CD14-positive monocyte (primary cell): ENCODE measurements at regions of chr20 and their contacts with region 1.

Region 1: GRCh38 chr20:40323361-40323794 is 365.7 kb downstream of the MAFB start:
- DNase-seq: peak; percentile 92 to 96 (median 94)
- H3K4me3 ChIP-seq: peak overlapping the region in 1 of 3 experiments; percentile 27
- H3K4me3 Mint-ChIP-seq: peak overlapping the region; percentile 35 to 44
- H3K27ac ChIP-seq: peak overlapping the region; percentile 78 to 89
- H3K27ac Mint-ChIP-seq: peak overlapping the region; percentile 92 to 99 (median 95)
- H3K4me1 ChIP-seq: peaks cover 71 to 78% of the 10 kb centered on the region in 2 donors
- H3K4me1 Mint-ChIP-seq: peaks cover 72% of the 10 kb centered on the region
- H3K27me3 ChIP-seq: no peaks in the 10 kb centered on the region
- H3K27me3 Mint-ChIP-seq: peaks cover 0 to 6% (median 6%) of the 10 kb centered on the region in 3 donors
- CTCF ChIP-seq: no peak

Region 2: DNA sequence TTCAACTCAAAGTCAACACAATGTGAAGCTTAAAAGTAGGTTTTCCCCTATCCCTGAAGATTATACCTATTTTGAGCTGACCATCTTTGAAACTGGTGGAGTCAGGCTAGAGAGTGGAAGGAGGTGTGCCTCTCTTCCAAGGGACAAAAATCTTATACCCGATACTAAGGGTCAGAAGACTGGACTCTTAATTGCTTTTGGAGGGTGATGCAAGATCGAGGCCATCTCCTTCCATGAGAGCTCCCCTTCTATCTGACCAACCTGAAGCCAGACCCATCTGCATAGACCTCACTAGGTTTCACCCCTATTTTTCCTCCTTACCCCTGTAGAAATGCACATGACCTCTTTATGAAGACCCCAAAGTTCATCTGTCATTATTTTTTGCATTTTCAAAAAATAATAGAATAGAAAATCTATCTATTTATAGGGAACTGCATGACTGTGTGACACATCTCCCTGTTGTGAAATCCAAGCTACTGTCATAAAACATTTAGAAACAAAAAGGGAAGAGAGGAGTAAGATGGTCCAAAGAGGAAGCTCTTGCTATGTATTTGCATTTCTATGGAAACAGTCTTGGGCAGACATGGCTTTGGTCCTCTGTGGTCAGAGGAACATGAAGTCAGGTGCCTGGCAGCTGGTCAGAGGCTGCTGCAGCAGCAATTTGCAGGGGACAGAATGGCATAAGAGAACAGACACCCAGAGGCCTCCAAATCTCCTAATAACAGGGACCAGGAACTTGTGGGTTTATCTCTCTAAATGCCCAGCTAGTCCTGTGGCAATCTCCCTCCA is 16.5 kb after region 1 on chr20:
- intact Hi-C with region 1: loop called in 1 of 2 experiments (anchors 1 kb)
- DNase-seq: peak; percentile 97 to 100 (median 99)
- H3K4me3 ChIP-seq: no peak overlapping the region
- H3K4me3 Mint-ChIP-seq: peak overlapping the region in 1 of 2 donors; percentile 50
- H3K27ac ChIP-seq: peak overlapping the region; percentile 93 to 98
- H3K27ac Mint-ChIP-seq: peak overlapping the region; percentile 97 to 100 (median 98)
- H3K4me1 ChIP-seq: peaks cover 19 to 28% of the 10 kb centered on the region in 2 donors
- H3K4me1 Mint-ChIP-seq: peaks cover 30% of the 10 kb centered on the region
- H3K27me3 ChIP-seq: peaks cover 0 to 2% of the 10 kb centered on the region in 2 donors
- H3K27me3 Mint-ChIP-seq: peaks cover 5 to 11% (median 8%) of the 10 kb centered on the region in 3 donors
- CTCF ChIP-seq: no peak

Region 3: GRCh38 chr20:40463171-40463570 is 139.8 kb after region 1 on chr20:
- intact Hi-C with region 1: loop called in 1 of 2 experiments (anchors 10 kb)
- DNase-seq: no peak
- H3K4me3 ChIP-seq: no peak overlapping the region
- H3K4me3 Mint-ChIP-seq: no peak overlapping the region
- H3K27ac ChIP-seq: peak overlapping the region in 1 of 2 donors; percentile 83
- H3K27ac Mint-ChIP-seq: peak overlapping the region in 6 of 7 donors; percentile 49 to 91 (median 78)
- H3K4me1 ChIP-seq: peaks cover 47 to 59% of the 10 kb centered on the region in 2 donors
- H3K4me1 Mint-ChIP-seq: peaks cover 56% of the 10 kb centered on the region
- H3K27me3 ChIP-seq: no peaks in the 10 kb centered on the region
- H3K27me3 Mint-ChIP-seq: peaks cover 2 to 6% (median 3%) of the 10 kb centered on the region in 3 donors
- CTCF ChIP-seq: no peak

Region 4: DNA sequence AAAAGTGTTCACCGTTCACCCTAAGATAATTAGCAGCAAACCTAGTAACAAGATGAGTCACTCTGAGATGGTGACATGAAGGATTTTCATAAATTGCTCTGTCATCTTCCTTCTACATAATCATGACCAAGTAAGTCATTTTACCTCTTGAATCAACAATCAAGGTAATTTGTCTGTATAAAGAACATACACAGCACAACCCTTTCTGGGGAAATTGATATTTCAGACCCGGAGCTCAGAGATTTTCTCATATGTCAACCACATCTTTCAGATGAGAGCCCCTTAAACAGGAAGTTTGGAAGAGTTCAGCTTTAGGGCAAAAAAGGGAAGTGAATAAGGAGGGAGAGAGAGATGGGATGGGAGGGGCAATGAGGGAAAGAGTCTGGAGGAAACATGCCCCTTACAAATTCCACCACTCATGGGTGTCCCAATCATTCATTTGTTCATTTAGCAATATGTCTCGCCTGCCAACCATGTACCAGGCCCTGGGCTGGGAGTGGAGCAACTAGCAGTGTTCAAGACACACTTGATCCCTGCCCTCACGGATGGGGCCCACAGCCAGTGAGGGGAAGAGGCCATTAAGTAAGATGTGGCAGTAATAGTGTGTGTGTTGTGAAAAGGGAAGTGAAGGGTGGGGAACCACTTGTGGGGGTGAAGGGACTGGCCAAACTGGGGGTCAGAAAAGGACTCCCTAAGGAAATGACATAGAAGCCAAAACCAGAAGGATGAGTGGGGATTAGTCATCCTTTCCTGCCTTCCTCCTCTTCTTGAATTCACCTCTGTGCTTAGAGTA is 174.7 kb after region 1 on chr20:
- intact Hi-C with region 1: loop called in 1 of 2 experiments (anchors 5 kb)
- DNase-seq: peak; percentile 96 to 99 (median 97)
- H3K4me3 ChIP-seq: peak overlapping the region in 1 of 3 experiments; percentile 40
- H3K4me3 Mint-ChIP-seq: peak overlapping the region; percentile 17 to 67
- H3K27ac ChIP-seq: peak overlapping the region; percentile 96 to 99
- H3K27ac Mint-ChIP-seq: peak overlapping the region; percentile 98 to 100 (median 100)
- H3K4me1 ChIP-seq: peaks cover 82% of the 10 kb centered on the region in 2 donors
- H3K4me1 Mint-ChIP-seq: peaks cover 86% of the 10 kb centered on the region
- H3K27me3 ChIP-seq: no peaks in the 10 kb centered on the region
- H3K27me3 Mint-ChIP-seq: no peaks in the 10 kb centered on the region
- CTCF ChIP-seq: no peak

Region 5: DNA sequence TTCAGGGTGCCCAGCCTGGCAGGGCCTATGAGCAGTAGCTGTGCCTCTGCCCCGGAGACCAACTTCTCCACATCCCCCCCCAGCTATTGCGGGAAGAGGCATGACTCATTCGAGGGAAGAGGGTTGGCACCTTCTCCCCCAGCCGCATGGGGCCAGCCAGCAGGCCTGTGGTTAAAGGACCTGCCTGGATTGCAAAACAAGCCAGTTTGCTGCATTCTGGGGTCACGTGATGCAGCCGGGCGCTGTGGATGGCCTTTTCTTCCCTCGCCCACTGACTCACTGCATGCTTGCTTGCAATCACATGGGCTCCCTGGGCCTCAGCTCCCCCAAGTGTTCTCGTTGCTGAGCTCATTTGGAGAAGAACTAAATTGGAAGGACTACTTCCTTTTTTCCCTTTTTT is 183.2 kb after region 1 on chr20:
- intact Hi-C with region 1: loop called in 1 of 2 experiments (anchors 5 kb)
- DNase-seq: peak; percentile 100
- H3K4me3 ChIP-seq: no peak overlapping the region
- H3K4me3 Mint-ChIP-seq: no peak overlapping the region
- H3K27ac ChIP-seq: peak overlapping the region; percentile 82 to 88
- H3K27ac Mint-ChIP-seq: peak overlapping the region; percentile 91 to 98 (median 95)
- H3K4me1 ChIP-seq: peaks cover 57 to 83% of the 10 kb centered on the region in 2 donors
- H3K4me1 Mint-ChIP-seq: peaks cover 80% of the 10 kb centered on the region
- H3K27me3 ChIP-seq: no peaks in the 10 kb centered on the region
- H3K27me3 Mint-ChIP-seq: peaks cover 0 to 1% (median 0%) of the 10 kb centered on the region in 3 donors
- CTCF ChIP-seq: no peak

Region 6: DNA sequence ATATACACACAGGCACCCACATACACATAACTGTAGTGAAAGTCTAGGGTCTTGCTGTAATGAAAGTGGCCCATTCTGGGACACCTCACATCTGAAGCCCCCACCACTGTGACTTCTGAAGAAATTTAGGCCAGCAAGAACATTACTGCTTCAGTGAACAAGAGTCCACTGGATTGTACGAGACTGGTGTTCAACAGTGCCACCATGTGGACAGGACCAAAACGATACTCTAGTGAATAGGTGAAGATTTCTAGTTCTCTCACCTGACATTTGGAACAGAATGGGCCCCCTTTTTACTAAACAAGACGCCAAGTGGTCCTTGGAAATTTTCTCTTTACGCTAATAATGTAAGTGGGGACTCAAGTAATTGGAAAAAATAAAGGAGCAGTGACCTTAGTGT is 208.7 kb after region 1 on chr20:
- intact Hi-C with region 1: no loop called
- DNase-seq: peak in 2 of 3 donors; percentile 18 to 34
- H3K4me3 ChIP-seq: no peak overlapping the region
- H3K4me3 Mint-ChIP-seq: no peak overlapping the region
- H3K27ac ChIP-seq: no peak overlapping the region
- H3K27ac Mint-ChIP-seq: no peak overlapping the region
- H3K4me1 ChIP-seq: peaks cover 0 to 4% of the 10 kb centered on the region in 2 donors
- H3K4me1 Mint-ChIP-seq: peaks cover 6% of the 10 kb centered on the region
- H3K27me3 ChIP-seq: peaks cover 0 to 4% of the 10 kb centered on the region in 2 donors
- H3K27me3 Mint-ChIP-seq: peaks cover 7 to 18% (median 12%) of the 10 kb centered on the region in 3 donors
- CTCF ChIP-seq: peak; percentile 50

Region 7: DNA sequence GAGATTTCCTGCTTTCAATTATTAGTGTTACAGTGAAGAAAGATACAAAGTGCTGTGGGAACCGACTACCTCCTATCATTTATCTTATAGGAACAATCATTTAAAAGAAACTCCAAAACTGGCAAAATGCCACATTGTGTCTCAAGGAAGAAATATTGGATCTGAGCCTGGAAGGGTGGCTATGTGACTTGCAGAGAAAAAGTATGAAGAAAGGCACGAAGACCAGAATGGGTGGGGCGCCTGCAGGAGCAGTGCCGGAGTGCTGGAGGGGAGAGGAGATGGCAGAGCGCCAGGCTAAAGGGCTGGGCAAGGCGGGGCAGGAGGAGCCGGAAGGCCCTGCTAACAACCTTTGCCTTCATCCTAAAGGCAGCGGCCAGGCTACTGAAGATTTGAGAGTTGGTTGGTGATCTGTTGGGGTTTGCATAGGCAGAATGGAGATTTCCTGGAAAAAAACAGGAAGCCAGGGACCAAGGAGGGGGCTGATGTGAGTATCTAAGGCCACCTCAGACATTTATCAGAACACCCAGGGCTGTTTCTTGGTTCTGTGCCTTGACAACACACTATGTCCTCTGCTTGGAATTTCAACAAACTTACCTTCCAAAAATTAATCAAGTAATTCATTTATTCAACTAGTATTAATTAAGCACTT is 240.0 kb after region 1 on chr20:
- intact Hi-C with region 1: loop called in 1 of 2 experiments (anchors 5 kb)
- DNase-seq: no peak
- H3K4me3 ChIP-seq: no peak overlapping the region
- H3K4me3 Mint-ChIP-seq: no peak overlapping the region
- H3K27ac ChIP-seq: peak overlapping the region in 1 of 2 donors; percentile 85
- H3K27ac Mint-ChIP-seq: peak overlapping the region in 4 of 7 donors; percentile 51 to 86 (median 78)
- H3K4me1 ChIP-seq: peaks cover 34 to 42% of the 10 kb centered on the region in 2 donors
- H3K4me1 Mint-ChIP-seq: peaks cover 42% of the 10 kb centered on the region
- H3K27me3 ChIP-seq: no peaks in the 10 kb centered on the region
- H3K27me3 Mint-ChIP-seq: peaks cover 2 to 7% (median 4%) of the 10 kb centered on the region in 3 donors
- CTCF ChIP-seq: no peak